Dendritic cell treated with granulocyte-macrophage colony-stimulating factor and Interleukin-4, amounts not matched to agents 40 ng/mL and 50 ng/mL, for 4 days (primary cell): ENCODE measurements at regions of chr10 and their contacts with region 1.

Region 1: GRCh38 chr10:51063659-51064535 is 10.4 kb upstream of the PRKG1 start:
- H3K4me3 Mint-ChIP-seq: no peak overlapping the region
- H3K27ac Mint-ChIP-seq: no peak overlapping the region
- H3K4me1 Mint-ChIP-seq: no peaks in the 10 kb centered on the region
- H3K27me3 Mint-ChIP-seq: no peaks in the 10 kb centered on the region

Region 2: GRCh38 chr10:51422311-51423120 is 358.6 kb after region 1 on chr10:
- intact Hi-C with region 1: loop called (anchors 1 kb)
- H3K4me3 Mint-ChIP-seq: no peak overlapping the region
- H3K27ac Mint-ChIP-seq: no peak overlapping the region
- H3K4me1 Mint-ChIP-seq: no peaks in the 10 kb centered on the region
- H3K27me3 Mint-ChIP-seq: no peaks in the 10 kb centered on the region

Region 3: DNA sequence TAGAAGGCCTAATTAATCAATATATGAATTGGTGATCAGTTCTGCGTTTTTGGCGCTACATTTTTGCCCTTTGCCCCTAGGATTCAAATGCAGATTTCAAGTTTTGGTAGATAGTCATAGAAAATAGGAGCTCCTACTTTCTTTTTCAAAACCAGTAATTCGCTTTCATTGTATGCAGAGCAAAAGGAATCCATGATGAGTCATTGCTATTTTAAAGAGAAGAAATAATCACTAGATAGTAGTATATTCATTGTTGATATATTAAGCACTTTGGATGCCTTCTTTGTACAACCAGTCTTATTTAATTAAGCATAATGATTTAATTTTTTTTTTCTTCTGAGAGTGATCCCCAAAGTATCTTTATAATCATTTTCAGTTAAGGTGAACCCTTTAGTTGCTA is 585.2 kb after region 1 on chr10:
- intact Hi-C with region 1: no loop called
- H3K4me3 Mint-ChIP-seq: no peak overlapping the region
- H3K27ac Mint-ChIP-seq: no peak overlapping the region
- H3K4me1 Mint-ChIP-seq: no peaks in the 10 kb centered on the region
- H3K27me3 Mint-ChIP-seq: no peaks in the 10 kb centered on the region

Region 4: GRCh38 chr10:51960494-51960895 is 896.6 kb after region 1 on chr10:
- intact Hi-C with region 1: loop called (anchors 2 kb)
- H3K4me3 Mint-ChIP-seq: no peak overlapping the region
- H3K27ac Mint-ChIP-seq: no peak overlapping the region
- H3K4me1 Mint-ChIP-seq: no peaks in the 10 kb centered on the region
- H3K27me3 Mint-ChIP-seq: no peaks in the 10 kb centered on the region

Region 5: GRCh38 chr10:52215745-52216361 is 1152.0 kb after region 1 on chr10:
- intact Hi-C with region 1: loop called (anchors 5 kb)
- H3K4me3 Mint-ChIP-seq: no peak overlapping the region
- H3K27ac Mint-ChIP-seq: no peak overlapping the region
- H3K4me1 Mint-ChIP-seq: no peaks in the 10 kb centered on the region
- H3K27me3 Mint-ChIP-seq: no peaks in the 10 kb centered on the region